Activated CD8-positive, alpha-beta T cell treated with anti-CD3 and anti-CD28 coated beads for 36 hours (primary cell): ENCODE measurements at regions of chr4 and their contacts with region 1.

Region 1: DNA sequence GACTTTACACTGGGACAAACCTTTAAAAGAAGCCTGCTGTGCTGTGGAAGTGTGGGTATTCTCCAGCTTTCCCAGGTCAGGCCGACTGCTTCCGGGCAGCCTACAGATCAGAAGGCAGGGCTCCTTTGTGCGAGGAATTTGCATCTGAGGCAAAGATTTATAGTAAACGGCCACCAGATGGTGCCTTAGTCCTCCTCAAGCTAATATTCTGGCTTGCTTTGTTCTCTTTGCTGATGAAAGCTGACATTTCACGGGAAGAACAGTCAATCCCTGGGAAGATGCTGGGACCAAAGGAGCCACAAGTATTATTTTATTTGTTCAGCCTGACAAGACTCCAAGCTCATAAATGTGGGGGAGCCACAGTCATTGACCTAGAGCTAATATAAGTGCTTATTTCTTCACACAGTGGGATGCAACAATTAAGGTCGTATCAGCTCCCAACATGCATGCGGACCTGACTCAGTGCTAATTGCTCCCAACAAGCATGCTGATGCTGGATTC is 120.7 kb upstream of the TRIM2 start:
- DNase-seq: peak; percentile 64
- ATAC-seq: peak; percentile 54
- H3K4me3 Mint-ChIP-seq: no peak overlapping the region
- H3K27ac Mint-ChIP-seq: peak overlapping the region; percentile 43
- H3K4me1 Mint-ChIP-seq: peaks cover 25% of the 10 kb centered on the region
- H3K27me3 Mint-ChIP-seq: peaks cover 10% of the 10 kb centered on the region
- CTCF ChIP-seq: peak; percentile 71

Region 2: DNA sequence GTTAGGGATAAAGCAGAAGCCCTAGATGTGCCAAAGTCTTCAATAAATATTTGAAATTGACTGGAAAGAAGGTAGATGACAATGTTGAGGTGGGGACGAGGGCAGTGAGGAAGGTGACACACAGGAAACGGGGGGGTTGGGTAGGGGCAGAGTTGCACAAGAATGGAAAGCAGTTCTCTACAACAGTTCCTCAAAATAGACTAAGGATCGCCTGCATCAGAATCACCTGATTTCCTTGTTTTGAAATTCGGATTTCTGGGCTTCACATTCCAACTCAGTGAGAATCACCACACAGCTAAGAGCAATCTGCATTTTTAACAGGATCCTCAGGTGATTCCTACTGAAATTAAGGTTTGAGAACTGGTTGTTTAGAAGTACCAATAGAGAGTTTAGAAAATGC is 233.1 kb before region 1 on chr4:
- CTCF ChIA-PET with region 1: interaction called, 26 read pairs
- POLR2A ChIA-PET with region 1: no interaction called
- intact Hi-C with region 1: loop called (anchors 2 kb)
- DNase-seq: peak; percentile 68
- ATAC-seq: peak; percentile 79
- H3K4me3 Mint-ChIP-seq: no peak overlapping the region
- H3K27ac Mint-ChIP-seq: peak overlapping the region; percentile 29
- H3K4me1 Mint-ChIP-seq: peaks cover 19% of the 10 kb centered on the region
- H3K27me3 Mint-ChIP-seq: no peaks in the 10 kb centered on the region
- CTCF ChIP-seq: no peak

Region 3: GRCh38 chr4:153095448-153096204 is 12.1 kb after region 1 on chr4:
- CTCF ChIA-PET with region 1: interaction called, 88 read pairs
- POLR2A ChIA-PET with region 1: interaction called, 3 read pairs
- intact Hi-C with region 1: no loop called
- DNase-seq: no peak
- ATAC-seq: no peak
- H3K4me3 Mint-ChIP-seq: no peak overlapping the region
- H3K27ac Mint-ChIP-seq: no peak overlapping the region
- H3K4me1 Mint-ChIP-seq: peaks cover 3% of the 10 kb centered on the region
- H3K27me3 Mint-ChIP-seq: no peaks in the 10 kb centered on the region
- CTCF ChIP-seq: no peak

Region 4: GRCh38 chr4:153107246-153107645 is 23.7 kb after region 1 on chr4:
- CTCF ChIA-PET with region 1: interaction called, 131 read pairs
- POLR2A ChIA-PET with region 1: interaction called, 3 read pairs
- intact Hi-C with region 1: no loop called
- DNase-seq: no peak
- ATAC-seq: no peak
- H3K4me3 Mint-ChIP-seq: no peak overlapping the region
- H3K27ac Mint-ChIP-seq: no peak overlapping the region
- H3K4me1 Mint-ChIP-seq: peaks cover 4% of the 10 kb centered on the region
- H3K27me3 Mint-ChIP-seq: peaks cover 1% of the 10 kb centered on the region
- CTCF ChIP-seq: no peak

Region 5: GRCh38 chr4:153115322-153116290 is 32.1 kb after region 1 on chr4:
- CTCF ChIA-PET with region 1: interaction called, 428 read pairs
- POLR2A ChIA-PET with region 1: interaction called, 6 read pairs
- intact Hi-C with region 1: no loop called
- DNase-seq: peak; percentile 88
- ATAC-seq: peak; percentile 64
- H3K4me3 Mint-ChIP-seq: peak overlapping the region; percentile 31
- H3K27ac Mint-ChIP-seq: no peak overlapping the region
- H3K4me1 Mint-ChIP-seq: peaks cover 14% of the 10 kb centered on the region
- H3K27me3 Mint-ChIP-seq: no peaks in the 10 kb centered on the region
- CTCF ChIP-seq: no peak

Region 6: GRCh38 chr4:153409412-153409811 is 325.9 kb after region 1 on chr4:
- CTCF ChIA-PET with region 1: no interaction called
- POLR2A ChIA-PET with region 1: no interaction called
- intact Hi-C with region 1: no loop called
- DNase-seq: no peak
- ATAC-seq: no peak
- H3K4me3 Mint-ChIP-seq: no peak overlapping the region
- H3K27ac Mint-ChIP-seq: no peak overlapping the region
- H3K4me1 Mint-ChIP-seq: no peaks in the 10 kb centered on the region
- H3K27me3 Mint-ChIP-seq: no peaks in the 10 kb centered on the region
- CTCF ChIP-seq: no peak